ENCODE measurements at regions of chrX and their contacts with region 1.

Region 1: DNA sequence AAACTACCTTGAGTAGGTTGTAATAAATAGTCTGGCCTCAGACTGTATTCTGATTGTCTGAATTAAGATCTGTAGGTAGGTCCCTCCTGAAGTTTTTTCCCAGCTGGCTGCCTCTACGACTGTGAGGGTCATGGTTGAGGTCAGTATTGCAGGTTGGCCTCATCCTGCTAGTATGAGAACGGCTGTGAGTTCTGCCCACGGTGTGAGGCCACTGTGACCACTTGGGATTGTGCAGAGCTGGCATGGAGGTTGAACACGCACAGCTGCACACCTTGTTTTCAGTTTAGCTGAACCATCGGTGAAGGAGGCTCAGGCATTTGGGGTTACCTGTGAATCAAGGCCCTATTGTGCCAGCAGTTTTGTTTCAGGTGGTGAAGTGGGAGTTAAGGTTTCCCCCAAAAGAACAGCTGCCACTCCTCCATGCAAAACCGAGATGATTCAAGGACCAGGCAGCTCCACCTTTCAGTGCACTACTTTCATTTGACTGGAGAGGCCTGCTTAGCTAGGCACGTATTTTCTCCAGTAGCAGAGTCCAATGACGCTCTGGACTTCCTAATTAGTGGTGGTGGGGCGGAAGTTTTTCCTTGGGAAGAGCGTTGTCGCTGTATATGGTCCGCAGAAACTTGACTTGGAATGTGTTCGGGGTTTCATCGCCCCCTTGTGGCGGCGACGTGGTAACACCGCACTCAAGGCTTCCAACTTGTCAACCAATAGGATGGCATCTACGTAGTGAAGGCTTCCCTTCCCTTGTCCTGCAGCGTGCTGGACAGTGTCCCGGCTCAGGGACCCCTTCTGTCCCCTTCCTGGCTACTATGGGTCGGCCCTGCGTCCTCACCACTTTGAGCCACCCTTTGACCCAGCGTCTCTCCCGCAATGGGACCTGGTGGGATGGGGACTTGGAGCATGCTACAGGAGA is 13.8 kb downstream of the CMC4 start:
- DNase-seq: peak; percentile 69
- H3K4me3 ChIP-seq: no peak overlapping the region
- H3K27ac ChIP-seq: no peak overlapping the region
- H3K4me1 ChIP-seq: no peaks in the 10 kb centered on the region
- H3K27me3 ChIP-seq: no peaks in the 10 kb centered on the region
- CTCF ChIP-seq: peak; percentile 84

Region 2: GRCh38 chrX:154980330-154981096 is 76.6 kb before region 1 on chrX:
- CTCF ChIA-PET with region 1: no interaction called
- POLR2A ChIA-PET with region 1: no interaction called
- intact Hi-C with region 1: loop called (anchors 1 kb)
- DNase-seq: peak; percentile 80
- H3K4me3 ChIP-seq: peak overlapping the region; percentile 44
- H3K27ac ChIP-seq: no peak overlapping the region
- H3K4me1 ChIP-seq: no peaks in the 10 kb centered on the region
- H3K27me3 ChIP-seq: no peaks in the 10 kb centered on the region
- CTCF ChIP-seq: peak; percentile 78

Region 3: GRCh38 chrX:155148724-155149537 is 91.8 kb after region 1 on chrX:
- CTCF ChIA-PET with region 1: no interaction called
- POLR2A ChIA-PET with region 1: no interaction called
- intact Hi-C with region 1: no loop called
- DNase-seq: peak; percentile 31
- H3K4me3 ChIP-seq: no peak overlapping the region
- H3K27ac ChIP-seq: no peak overlapping the region
- H3K4me1 ChIP-seq: no peaks in the 10 kb centered on the region
- H3K27me3 ChIP-seq: no peaks in the 10 kb centered on the region
- CTCF ChIP-seq: peak; percentile 66

Measured in A673 (cell line).